ENCODE measurements at regions of chr16 and their contacts with region 1.

Region 1: GRCh38 chr16:3065069-3065741 is at the start of gene IL32:
- DNase-seq: peak; percentile 87
- ATAC-seq: peak; percentile 65
- H3K4me3 Mint-ChIP-seq: peak within 1 kb of the TSS; percentile 100
- H3K27ac Mint-ChIP-seq: peak within 1 kb of the TSS; percentile 97
- H3K4me1 Mint-ChIP-seq: peaks cover 59% of the 10 kb centered on the region
- H3K27me3 Mint-ChIP-seq: no peaks in the 10 kb centered on the region
- total RNA-seq, gene IL32: 2,870 to 3,468 TPM

Region 2: DNA sequence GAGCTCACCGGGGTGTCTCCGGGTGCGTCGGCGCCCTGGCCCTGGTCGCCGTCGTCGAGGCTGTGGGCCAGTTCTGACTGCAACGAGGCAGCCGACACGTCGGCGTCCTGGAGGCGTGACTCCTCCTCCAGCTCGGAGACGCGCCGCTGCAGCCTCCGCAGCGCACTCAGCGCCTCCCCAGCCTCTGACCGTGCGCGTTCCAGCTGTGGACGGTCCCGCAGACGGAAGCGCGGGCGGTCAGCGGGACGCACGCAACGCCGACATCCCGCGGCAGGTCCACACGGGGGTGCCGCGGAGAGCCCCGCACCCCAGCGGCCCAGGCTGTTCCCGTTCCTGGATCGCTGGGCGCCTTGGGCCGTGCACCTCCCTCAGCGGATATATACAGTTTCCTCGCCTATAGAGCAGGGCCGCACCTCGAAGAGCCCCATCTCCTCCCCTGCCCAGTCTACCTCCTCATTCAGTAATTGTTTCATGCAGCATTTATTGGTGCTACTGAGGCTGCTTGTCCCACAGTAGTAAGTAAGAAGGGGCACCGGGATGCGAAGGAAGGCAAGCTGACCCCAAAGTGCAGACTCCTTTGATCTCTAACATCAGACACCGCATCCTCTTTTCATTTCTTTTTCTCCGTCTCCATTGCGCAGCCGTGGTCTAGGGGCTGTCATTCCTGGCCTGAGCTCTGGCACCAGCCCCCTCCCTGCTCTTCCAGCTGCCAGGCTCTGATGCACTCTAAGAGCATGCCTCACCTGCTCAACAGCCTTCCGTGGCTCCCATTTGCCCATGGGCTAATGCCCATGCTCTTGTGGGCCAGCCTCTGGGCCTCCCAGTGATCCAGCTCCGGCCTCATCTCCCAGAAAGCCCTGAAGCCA is 35.4 kb before region 1 on chr16:
- CTCF ChIA-PET with region 1: interaction called, 34 read pairs
- DNase-seq: peak; percentile 81
- ATAC-seq: peak; percentile 66
- H3K4me3 Mint-ChIP-seq: peak overlapping the region; percentile 65
- H3K27ac Mint-ChIP-seq: peak overlapping the region; percentile 62
- H3K4me1 Mint-ChIP-seq: peaks cover 44% of the 10 kb centered on the region
- H3K27me3 Mint-ChIP-seq: peaks cover 51% of the 10 kb centered on the region

Region 3: DNA sequence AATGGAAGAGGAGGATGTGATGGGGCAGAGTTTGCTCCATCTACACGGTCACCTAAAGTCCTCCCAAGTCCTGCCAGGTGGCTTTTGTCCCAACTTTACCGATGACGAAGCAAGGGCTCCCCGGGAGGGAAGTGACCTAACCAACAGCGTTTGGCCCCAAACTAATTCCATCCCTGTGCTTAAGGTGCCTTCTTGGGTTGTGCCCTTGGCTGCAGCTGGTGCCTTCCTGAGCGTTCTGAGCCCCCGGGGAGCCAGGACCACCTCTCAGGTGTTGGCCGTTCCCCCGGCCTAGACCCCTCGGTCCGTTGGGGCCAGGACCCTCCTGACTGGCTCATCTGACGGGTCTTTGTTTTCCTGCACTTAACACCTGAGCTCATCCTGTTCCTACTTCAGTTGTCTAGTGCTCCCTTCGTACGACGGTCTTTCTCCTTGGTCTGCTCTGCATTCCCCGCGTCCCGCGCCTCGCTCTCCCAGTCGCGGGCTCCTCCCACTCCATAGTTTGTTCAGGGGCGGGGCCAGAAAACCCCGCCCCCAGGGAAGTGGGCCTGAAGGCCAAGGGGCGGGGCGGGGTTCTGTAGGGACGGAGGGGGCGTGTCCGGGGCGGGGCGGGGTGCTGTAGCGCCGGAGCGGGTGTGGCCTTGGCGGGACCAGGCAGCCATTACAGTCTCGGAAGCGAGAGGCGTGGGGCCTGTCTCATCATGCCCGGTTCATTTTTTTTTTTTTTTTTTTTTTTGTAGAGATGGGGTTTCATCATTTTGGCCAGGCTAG is 34.7 kb after region 1 on chr16:
- CTCF ChIA-PET with region 1: interaction called, 33 read pairs
- DNase-seq: peak; percentile 97
- ATAC-seq: peak; percentile 93
- H3K4me3 Mint-ChIP-seq: peak overlapping the region; percentile 74
- H3K27ac Mint-ChIP-seq: peak overlapping the region; percentile 80
- H3K4me1 Mint-ChIP-seq: peaks cover 51% of the 10 kb centered on the region
- H3K27me3 Mint-ChIP-seq: no peaks in the 10 kb centered on the region